ENCODE measurements at regions of chr16 and their contacts with region 1.

Region 1: GRCh38 chr16:67428146-67428731 is 2.7 kb upstream of the HSD11B2 start:
- DNase-seq: peak; percentile 80 to 83
- H3K4me3 ChIP-seq: no peak overlapping the region
- H3K4me3 Mint-ChIP-seq: no peak overlapping the region
- H3K27ac Mint-ChIP-seq: no peak overlapping the region
- H3K4me1 ChIP-seq: peaks cover 32% of the 10 kb centered on the region
- H3K4me1 Mint-ChIP-seq: peaks cover 14% of the 10 kb centered on the region
- H3K27me3 ChIP-seq: no peaks in the 10 kb centered on the region
- H3K27me3 Mint-ChIP-seq: no peaks in the 10 kb centered on the region
- CTCF ChIP-seq: peak; percentile 89 to 97

Region 2: DNA sequence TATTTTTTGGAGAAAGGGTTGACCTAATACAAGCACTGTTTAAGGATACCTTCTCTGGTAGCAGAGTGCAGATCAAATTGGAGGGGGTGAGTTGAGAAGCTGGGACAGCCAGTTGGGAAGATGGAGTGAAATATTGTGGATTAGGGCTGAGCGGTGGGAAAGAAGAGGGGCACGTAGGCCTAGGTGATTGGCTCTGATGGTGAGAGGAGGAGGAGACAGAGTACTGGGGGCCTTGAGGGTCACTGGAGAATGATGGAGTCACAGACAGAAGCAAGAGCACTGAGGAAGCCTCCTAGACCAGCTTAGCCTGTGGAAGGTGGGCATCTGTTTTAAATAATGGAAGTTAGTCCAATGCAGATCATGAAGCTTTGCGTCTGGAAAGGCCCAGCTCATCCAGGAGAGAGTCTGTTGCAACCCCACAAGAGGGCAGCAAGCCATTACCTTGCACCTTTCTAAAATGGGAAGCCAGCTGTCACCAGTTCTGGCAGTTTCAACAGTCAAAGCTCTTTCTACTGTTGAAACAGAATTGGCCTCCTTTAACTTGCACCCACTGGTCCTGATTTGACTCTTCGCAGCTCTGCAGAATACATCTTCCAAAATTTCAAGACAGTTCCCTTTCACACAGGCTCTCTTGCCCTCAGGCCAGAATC is 167.7 kb before region 1 on chr16:
- CTCF ChIA-PET with region 1: interaction called, 12 read pairs
- POLR2A ChIA-PET with region 1: no interaction called
- intact Hi-C with region 1: no loop called
- DNase-seq: peak; percentile 64 to 72
- H3K4me3 ChIP-seq: no peak overlapping the region
- H3K4me3 Mint-ChIP-seq: no peak overlapping the region
- H3K27ac Mint-ChIP-seq: no peak overlapping the region
- H3K4me1 ChIP-seq: no peaks in the 10 kb centered on the region; the same call in 1 of the 2 replicates
- H3K4me1 Mint-ChIP-seq: no peaks in the 10 kb centered on the region
- H3K27me3 ChIP-seq: no peaks in the 10 kb centered on the region
- H3K27me3 Mint-ChIP-seq: no peaks in the 10 kb centered on the region
- CTCF ChIP-seq: peak; percentile 67 to 84

Region 3: GRCh38 chr16:67404740-67405226 is 23.5 kb before region 1 on chr16:
- CTCF ChIA-PET with region 1: interaction called, 6 read pairs
- POLR2A ChIA-PET with region 1: interaction called, 8 read pairs
- intact Hi-C with region 1: loop called (anchors 1 kb)
- DNase-seq: peak; percentile 98
- H3K4me3 ChIP-seq: no peak overlapping the region
- H3K4me3 Mint-ChIP-seq: peak overlapping the region; percentile 46
- H3K27ac Mint-ChIP-seq: peak overlapping the region; percentile 96
- H3K4me1 ChIP-seq: peaks cover 32% of the 10 kb centered on the region
- H3K4me1 Mint-ChIP-seq: peaks cover 43% of the 10 kb centered on the region
- H3K27me3 ChIP-seq: no peaks in the 10 kb centered on the region
- H3K27me3 Mint-ChIP-seq: no peaks in the 10 kb centered on the region
- CTCF ChIP-seq: peak in 1 of 2 experiments; percentile 33

Region 4: DNA sequence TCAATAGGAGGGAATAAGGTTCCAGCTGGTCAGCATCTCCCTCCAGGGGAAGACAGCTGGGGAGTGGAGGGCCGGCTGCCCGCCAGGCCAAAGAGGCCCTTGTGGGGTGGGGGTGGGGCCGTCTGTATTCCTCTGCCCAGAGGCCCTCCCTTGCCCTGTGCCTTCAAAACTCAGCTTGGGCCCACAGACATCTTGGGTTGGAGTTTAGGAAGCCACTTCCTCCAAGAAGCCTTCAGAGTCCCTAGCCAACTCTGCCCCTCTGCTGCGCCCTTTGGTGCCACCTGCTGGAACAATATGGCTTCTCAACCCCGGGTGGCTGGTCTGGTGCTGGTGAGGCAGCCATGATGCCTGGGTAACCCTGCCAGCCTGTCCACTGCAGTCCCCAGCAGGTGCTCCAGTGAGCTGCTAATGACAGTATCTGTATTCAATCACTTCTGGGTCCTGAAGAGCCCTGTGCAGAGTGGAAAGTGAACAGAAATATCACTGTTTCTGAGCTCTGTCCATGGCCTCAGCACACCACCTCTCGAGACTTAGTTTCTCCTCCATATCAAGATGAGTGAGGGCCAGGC is 19.4 kb after region 1 on chr16:
- CTCF ChIA-PET with region 1: interaction called, 19 read pairs
- POLR2A ChIA-PET with region 1: interaction called, 4 read pairs
- intact Hi-C with region 1: loop called (anchors 2 kb)
- DNase-seq: peak; percentile 70 to 74
- H3K4me3 ChIP-seq: no peak overlapping the region
- H3K4me3 Mint-ChIP-seq: no peak overlapping the region
- H3K27ac Mint-ChIP-seq: no peak overlapping the region
- H3K4me1 ChIP-seq: no peaks in the 10 kb centered on the region
- H3K4me1 Mint-ChIP-seq: no peaks in the 10 kb centered on the region
- H3K27me3 ChIP-seq: no peaks in the 10 kb centered on the region
- H3K27me3 Mint-ChIP-seq: no peaks in the 10 kb centered on the region
- CTCF ChIP-seq: peak; percentile 64 to 69

Region 5: DNA sequence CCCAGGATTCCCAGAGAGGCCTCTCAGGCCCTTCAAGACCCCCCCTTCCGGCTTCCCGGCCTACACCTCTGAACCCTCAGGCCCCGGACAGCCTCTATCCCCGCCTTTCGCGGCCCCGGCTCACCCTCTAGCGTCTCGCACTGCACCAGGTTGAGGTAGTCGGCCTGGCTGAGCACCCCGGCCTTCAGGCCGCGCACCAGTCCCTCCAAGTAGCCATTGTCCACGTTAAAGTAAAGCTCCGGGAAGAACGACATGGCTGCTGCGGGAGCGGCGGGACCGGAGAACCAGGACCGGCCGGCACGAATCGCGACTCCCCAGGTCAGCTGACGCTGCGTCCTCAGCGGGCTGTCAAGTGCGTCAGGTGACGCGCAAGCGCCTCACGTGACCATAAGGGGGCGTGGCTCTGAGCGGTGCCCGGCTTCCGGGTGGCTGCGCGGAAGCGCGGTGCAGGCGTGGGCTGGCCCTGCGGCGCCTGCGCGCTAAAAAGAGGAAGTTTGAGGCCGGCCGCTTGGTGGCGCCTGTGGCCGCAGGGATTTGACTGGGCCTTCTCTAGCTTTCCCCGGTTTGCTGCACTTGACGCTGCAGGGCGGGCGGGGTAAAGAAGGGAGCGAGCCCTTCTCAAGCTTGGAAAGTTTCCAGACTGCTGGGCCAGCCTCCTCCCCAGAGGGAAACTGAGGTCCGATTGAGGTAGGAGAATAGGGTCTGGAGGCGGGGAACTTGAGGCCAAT is 52.8 kb after region 1 on chr16 and contains the start of gene ATP6V0D1:
- CTCF ChIA-PET with region 1: interaction called, 13 read pairs
- POLR2A ChIA-PET with region 1: interaction called, 11 read pairs
- intact Hi-C with region 1: loop called (anchors 5 kb)
- DNase-seq: peak; percentile 98 to 100
- H3K4me3 ChIP-seq: peak within 1 kb of the TSS; percentile 94
- H3K4me3 Mint-ChIP-seq: peak within 1 kb of the TSS; percentile 98
- H3K27ac Mint-ChIP-seq: peak within 1 kb of the TSS; percentile 94
- H3K4me1 ChIP-seq: peaks cover 15% of the 10 kb centered on the region
- H3K4me1 Mint-ChIP-seq: peaks cover 19% of the 10 kb centered on the region
- H3K27me3 ChIP-seq: no peaks in the 10 kb centered on the region
- H3K27me3 Mint-ChIP-seq: no peaks in the 10 kb centered on the region
- CTCF ChIP-seq: peak; percentile 89 to 96
- total RNA-seq, gene ATP6V0D1: 107 and 110 TPM in 2 replicates